Caco-2 (cell line): ENCODE measurements at regions of chr9 and their contacts with region 1.

Region 1: GRCh38 chr9:127802576-127803443 is at the start of gene FPGS:
- DNase-seq: peak; percentile 89 to 90
- H3K4me3 ChIP-seq: peak within 1 kb of the TSS; percentile 86
- H3K4me3 Mint-ChIP-seq: peak within 1 kb of the TSS; percentile 86
- H3K27ac Mint-ChIP-seq: peak within 1 kb of the TSS; percentile 77
- H3K4me1 ChIP-seq: peaks cover 26% of the 10 kb centered on the region
- H3K4me1 Mint-ChIP-seq: peaks cover 14% of the 10 kb centered on the region
- H3K27me3 ChIP-seq: no peaks in the 10 kb centered on the region
- H3K27me3 Mint-ChIP-seq: no peaks in the 10 kb centered on the region
- CTCF ChIP-seq: peak in 1 of 2 experiments; percentile 4
- total RNA-seq, gene FPGS: 54.4 and 57.3 TPM in 2 replicates

Region 2: GRCh38 chr9:127676636-127677035 is 126.2 kb before region 1 on chr9:
- CTCF ChIA-PET with region 1: no interaction called
- POLR2A ChIA-PET with region 1: no interaction called
- intact Hi-C with region 1: no loop called
- DNase-seq: no peak
- H3K4me3 ChIP-seq: no peak overlapping the region
- H3K4me3 Mint-ChIP-seq: no peak overlapping the region
- H3K27ac Mint-ChIP-seq: no peak overlapping the region
- H3K4me1 ChIP-seq: no peaks in the 10 kb centered on the region
- H3K4me1 Mint-ChIP-seq: no peaks in the 10 kb centered on the region
- H3K27me3 ChIP-seq: no peaks in the 10 kb centered on the region
- H3K27me3 Mint-ChIP-seq: peaks cover 3% of the 10 kb centered on the region
- CTCF ChIP-seq: no peak

Region 3: GRCh38 chr9:127792417-127793031 is 10.3 kb before region 1 on chr9:
- CTCF ChIA-PET with region 1: interaction called, 5 read pairs
- POLR2A ChIA-PET with region 1: interaction called, 11 read pairs
- intact Hi-C with region 1: no loop called
- DNase-seq: no peak
- H3K4me3 ChIP-seq: no peak overlapping the region
- H3K4me3 Mint-ChIP-seq: no peak overlapping the region
- H3K27ac Mint-ChIP-seq: no peak overlapping the region
- H3K4me1 ChIP-seq: no peaks in the 10 kb centered on the region
- H3K4me1 Mint-ChIP-seq: no peaks in the 10 kb centered on the region
- H3K27me3 ChIP-seq: no peaks in the 10 kb centered on the region
- H3K27me3 Mint-ChIP-seq: no peaks in the 10 kb centered on the region
- CTCF ChIP-seq: no peak

Region 4: DNA sequence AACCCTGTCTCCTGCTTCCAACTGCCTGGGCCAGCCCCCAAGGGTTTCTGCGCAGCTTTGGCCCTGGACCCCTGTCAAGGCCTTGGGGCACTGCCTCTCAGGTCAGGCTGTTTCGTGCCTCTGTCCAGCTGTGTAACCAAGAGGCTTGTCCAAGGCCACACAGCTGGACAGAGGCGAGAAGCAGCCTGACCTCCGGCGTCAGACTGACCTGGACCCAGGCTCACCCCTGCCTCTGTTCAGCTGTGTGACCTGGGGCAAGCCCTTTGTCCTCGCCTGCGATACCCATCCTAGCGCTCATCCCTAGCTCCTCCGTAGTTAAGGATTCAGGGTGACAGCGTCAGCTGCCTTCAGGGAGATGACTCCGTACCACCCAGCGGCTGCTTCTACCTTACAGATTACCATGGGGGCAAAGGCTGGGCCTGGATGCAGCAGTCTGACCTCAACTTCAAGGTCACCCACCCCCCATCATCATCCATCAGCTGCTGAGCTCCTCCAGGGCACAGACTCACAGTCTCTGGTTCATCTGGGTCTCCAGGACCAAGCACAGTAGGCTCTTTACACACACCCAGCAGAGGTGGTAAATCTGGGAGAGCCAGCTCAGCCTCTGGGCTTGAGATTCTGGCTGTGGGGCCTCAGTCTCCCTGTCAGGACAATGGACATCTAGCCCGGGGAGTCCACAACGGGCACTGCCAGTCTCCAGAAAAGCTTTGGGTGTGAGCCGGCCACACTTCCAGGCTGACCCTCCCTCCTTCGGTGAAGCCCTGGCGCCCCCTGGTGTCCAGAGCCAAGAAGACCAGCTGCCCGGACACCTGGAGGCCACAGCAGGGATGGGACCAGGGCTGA is 66.7 kb after region 1 on chr9:
- CTCF ChIA-PET with region 1: interaction called, 12 read pairs
- POLR2A ChIA-PET with region 1: no interaction called
- intact Hi-C with region 1: loop called (anchors 2 kb)
- DNase-seq: peak; percentile 88 to 93
- H3K4me3 ChIP-seq: no peak overlapping the region
- H3K4me3 Mint-ChIP-seq: no peak overlapping the region
- H3K27ac Mint-ChIP-seq: no peak overlapping the region
- H3K4me1 ChIP-seq: no peaks in the 10 kb centered on the region
- H3K4me1 Mint-ChIP-seq: peaks cover 11% of the 10 kb centered on the region
- H3K27me3 ChIP-seq: no peaks in the 10 kb centered on the region
- H3K27me3 Mint-ChIP-seq: no peaks in the 10 kb centered on the region
- CTCF ChIP-seq: peak; percentile 94 to 95

Region 5: DNA sequence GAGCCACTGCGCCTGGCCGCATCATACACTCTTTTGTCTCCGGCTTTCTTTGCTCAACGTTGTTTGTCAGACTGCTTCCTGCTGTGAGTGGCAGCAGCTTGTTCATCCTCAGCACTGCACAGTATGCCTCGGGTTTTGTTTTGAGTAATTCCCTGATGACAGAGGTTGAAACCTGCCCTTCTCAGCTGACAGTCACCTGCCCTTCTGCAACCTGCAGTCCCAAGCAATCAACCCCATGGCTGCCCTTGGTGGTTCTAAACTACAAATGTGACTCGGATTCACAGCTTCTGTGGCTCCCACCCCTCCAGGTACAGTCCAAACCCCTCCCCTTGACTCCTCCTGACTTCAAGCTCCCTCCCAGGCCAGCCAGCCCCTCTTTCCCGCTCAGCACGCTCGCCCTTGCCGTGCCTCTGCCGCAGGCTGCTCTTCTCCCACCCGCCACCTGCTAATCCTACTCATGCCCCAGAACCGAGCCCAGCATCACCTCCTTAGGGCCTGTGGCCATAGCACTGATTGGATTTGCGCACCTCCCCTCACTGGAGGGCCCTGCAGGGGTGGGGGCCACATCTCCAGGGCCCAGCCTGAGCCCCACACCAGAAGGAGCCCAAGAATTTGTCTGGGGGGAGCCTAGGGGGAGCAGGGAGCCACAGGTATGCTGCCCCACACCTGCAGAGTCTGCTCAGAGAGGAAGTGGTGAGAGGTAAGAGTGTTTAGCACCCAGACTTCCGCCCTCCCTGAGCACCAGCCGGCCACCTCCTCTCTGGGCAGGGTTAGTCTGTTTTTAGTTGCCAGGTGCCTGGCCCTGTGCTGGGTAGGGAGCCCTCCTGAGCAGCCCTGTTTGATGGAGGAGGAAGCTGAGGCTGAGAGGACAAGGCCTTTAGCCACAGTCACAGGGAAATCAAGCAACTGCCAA is 167.8 kb after region 1 on chr9:
- CTCF ChIA-PET with region 1: no interaction called
- POLR2A ChIA-PET with region 1: no interaction called
- intact Hi-C with region 1: no loop called
- DNase-seq: no peak
- H3K4me3 ChIP-seq: no peak overlapping the region
- H3K4me3 Mint-ChIP-seq: no peak overlapping the region
- H3K27ac Mint-ChIP-seq: peak overlapping the region; percentile 44
- H3K4me1 ChIP-seq: peaks cover 34% of the 10 kb centered on the region
- H3K4me1 Mint-ChIP-seq: peaks cover 27% of the 10 kb centered on the region
- H3K27me3 ChIP-seq: no peaks in the 10 kb centered on the region
- H3K27me3 Mint-ChIP-seq: no peaks in the 10 kb centered on the region
- CTCF ChIP-seq: no peak